Mammary epithelial cell (primary cell): ENCODE measurements at regions of chr20 and their contacts with region 1.

Region 1: DNA sequence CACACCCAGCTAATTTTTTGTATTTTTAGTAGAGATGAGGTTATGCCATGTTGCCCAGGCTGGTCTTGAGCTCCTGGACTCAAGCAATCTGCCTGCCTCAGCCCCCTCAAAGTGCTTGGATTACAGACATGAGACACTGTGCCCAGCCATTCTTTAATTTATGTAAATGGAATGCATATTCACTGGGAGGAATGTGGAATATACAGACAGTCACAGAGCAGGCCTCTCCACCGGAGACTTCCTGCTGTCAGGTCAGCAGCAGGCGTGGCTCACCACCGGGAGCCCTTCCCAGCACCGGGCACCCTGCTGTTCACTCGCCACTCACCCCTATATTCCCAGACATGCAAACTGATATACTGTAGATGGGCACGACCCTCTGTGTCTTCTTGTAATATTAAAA is 83.0 kb downstream of the TFAP2C start:
- DNase-seq: peak; percentile 43
- H3K4me3 ChIP-seq: no peak overlapping the region
- H3K27ac ChIP-seq: no peak overlapping the region
- H3K4me1 ChIP-seq: peaks cover 4% of the 10 kb centered on the region
- H3K27me3 ChIP-seq: no peaks in the 10 kb centered on the region
- CTCF ChIP-seq: no peak

Region 2: DNA sequence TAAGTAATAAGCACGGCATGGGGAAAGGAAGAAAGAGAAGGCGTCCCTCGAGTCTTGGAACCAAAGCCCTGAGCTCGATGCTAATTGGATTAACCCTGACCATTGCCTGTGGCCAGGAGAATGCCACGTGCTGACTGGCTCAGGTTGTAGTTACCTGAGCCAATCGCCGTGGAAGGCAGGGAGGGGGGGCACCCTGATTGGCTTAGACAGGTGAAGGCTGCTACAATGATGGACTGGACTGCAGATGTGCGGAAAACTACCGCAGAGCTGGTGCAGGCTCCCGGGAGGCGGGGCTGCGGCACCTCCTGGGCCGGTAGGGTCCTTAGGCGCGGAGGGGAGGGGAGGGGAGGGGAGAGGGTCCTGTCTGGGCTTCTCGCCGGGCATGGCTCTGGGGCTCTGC is 38.3 kb after region 1 on chr20:
- CTCF ChIA-PET with region 1: no interaction called
- dilution Hi-C with region 1: loop called (anchors 5 kb)
- in situ Hi-C with region 1: no loop called
- intact Hi-C with region 1: no loop called
- DNase-seq: no peak
- H3K4me3 ChIP-seq: no peak overlapping the region
- H3K27ac ChIP-seq: no peak overlapping the region
- H3K4me1 ChIP-seq: no peaks in the 10 kb centered on the region
- H3K27me3 ChIP-seq: no peaks in the 10 kb centered on the region
- CTCF ChIP-seq: no peak

Region 3: GRCh38 chr20:56788040-56788983 is 76.2 kb after region 1 on chr20:
- CTCF ChIA-PET with region 1: no interaction called
- dilution Hi-C with region 1: no loop called
- in situ Hi-C with region 1: no loop called
- intact Hi-C with region 1: loop called (anchors 5 kb)
- DNase-seq: peak; percentile 85
- H3K4me3 ChIP-seq: no peak overlapping the region
- H3K27ac ChIP-seq: peak overlapping the region; percentile 99
- H3K4me1 ChIP-seq: peaks cover 18% of the 10 kb centered on the region
- H3K27me3 ChIP-seq: no peaks in the 10 kb centered on the region
- CTCF ChIP-seq: no peak

Region 4: GRCh38 chr20:56875046-56875551 is 163.0 kb after region 1 on chr20:
- CTCF ChIA-PET with region 1: no interaction called
- dilution Hi-C with region 1: no loop called
- in situ Hi-C with region 1: no loop called
- intact Hi-C with region 1: loop called (anchors 10 kb)
- DNase-seq: peak; percentile 91
- H3K4me3 ChIP-seq: no peak overlapping the region
- H3K27ac ChIP-seq: peak overlapping the region; percentile 12
- H3K4me1 ChIP-seq: peaks cover 7% of the 10 kb centered on the region
- H3K27me3 ChIP-seq: no peaks in the 10 kb centered on the region
- CTCF ChIP-seq: no peak

Region 5: GRCh38 chr20:56974499-56975236 is 262.5 kb after region 1 on chr20:
- CTCF ChIA-PET with region 1: no interaction called
- dilution Hi-C with region 1: no loop called
- in situ Hi-C with region 1: no loop called
- intact Hi-C with region 1: loop called (anchors 10 kb)
- DNase-seq: peak; percentile 55
- H3K4me3 ChIP-seq: no peak overlapping the region
- H3K27ac ChIP-seq: no peak overlapping the region
- H3K4me1 ChIP-seq: no peaks in the 10 kb centered on the region
- H3K27me3 ChIP-seq: peaks cover 3% of the 10 kb centered on the region
- CTCF ChIP-seq: peak; percentile 86

Region 6: GRCh38 chr20:57361212-57361915 is 649.2 kb after region 1 on chr20:
- CTCF ChIA-PET with region 1: no interaction called
- dilution Hi-C with region 1: no loop called
- in situ Hi-C with region 1: no loop called
- intact Hi-C with region 1: no loop called
- DNase-seq: peak; percentile 81
- H3K4me3 ChIP-seq: no peak overlapping the region
- H3K27ac ChIP-seq: no peak overlapping the region
- H3K4me1 ChIP-seq: no peaks in the 10 kb centered on the region
- H3K27me3 ChIP-seq: no peaks in the 10 kb centered on the region
- CTCF ChIP-seq: no peak